Activated CD4-positive, alpha-beta memory T cell treated with anti-CD3 and anti-CD28 coated beads for 36 hours (primary cell): ENCODE measurements at regions of chr22 and their contacts with region 1.

Region 1: GRCh38 chr22:22687638-22688500 is 43.5 kb downstream of the GGTLC2 start:
- DNase-seq: peak; percentile 40
- H3K4me3 Mint-ChIP-seq: no peak overlapping the region
- H3K27ac Mint-ChIP-seq: no peak overlapping the region
- H3K4me1 Mint-ChIP-seq: no peaks in the 10 kb centered on the region
- H3K27me3 Mint-ChIP-seq: no peaks in the 10 kb centered on the region

Region 2: GRCh38 chr22:22593964-22594656 is 93.8 kb before region 1 on chr22:
- CTCF ChIA-PET with region 1: interaction called, 3 read pairs
- POLR2A ChIA-PET with region 1: no interaction called
- intact Hi-C with region 1: loop called (anchors 10 kb)
- DNase-seq: peak; percentile 70
- H3K4me3 Mint-ChIP-seq: no peak overlapping the region
- H3K27ac Mint-ChIP-seq: no peak overlapping the region
- H3K4me1 Mint-ChIP-seq: peaks cover 5% of the 10 kb centered on the region
- H3K27me3 Mint-ChIP-seq: peaks cover 4% of the 10 kb centered on the region

Region 3: GRCh38 chr22:22666307-22667091 is 21.4 kb before region 1 on chr22:
- CTCF ChIA-PET with region 1: interaction called, 13 read pairs
- POLR2A ChIA-PET with region 1: no interaction called
- intact Hi-C with region 1: no loop called
- DNase-seq: peak; percentile 40
- H3K4me3 Mint-ChIP-seq: no peak overlapping the region
- H3K27ac Mint-ChIP-seq: no peak overlapping the region
- H3K4me1 Mint-ChIP-seq: no peaks in the 10 kb centered on the region
- H3K27me3 Mint-ChIP-seq: peaks cover 2% of the 10 kb centered on the region

Region 4: DNA sequence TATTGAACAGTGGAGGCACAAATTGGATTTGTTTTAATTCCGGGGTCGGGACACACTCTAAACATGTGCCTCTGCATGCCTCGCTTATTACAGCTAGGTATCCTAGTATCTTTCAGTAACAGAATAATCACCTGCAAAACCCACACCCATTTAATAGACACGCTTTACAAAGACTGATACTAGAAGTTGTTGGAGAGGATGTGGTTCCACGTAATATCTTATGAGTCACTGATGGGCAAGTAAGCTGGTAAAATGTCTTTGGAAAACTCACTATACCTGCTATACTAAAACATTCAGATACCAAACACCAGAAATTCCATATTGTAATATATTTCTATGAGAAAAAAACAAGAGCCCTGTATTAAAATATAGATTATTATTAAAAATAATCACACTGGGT is 40.5 kb after region 1 on chr22:
- CTCF ChIA-PET with region 1: no interaction called
- POLR2A ChIA-PET with region 1: no interaction called
- intact Hi-C with region 1: no loop called
- DNase-seq: no peak
- H3K4me3 Mint-ChIP-seq: no peak overlapping the region
- H3K27ac Mint-ChIP-seq: no peak overlapping the region
- H3K4me1 Mint-ChIP-seq: peaks cover 9% of the 10 kb centered on the region
- H3K27me3 Mint-ChIP-seq: no peaks in the 10 kb centered on the region